ENCODE measurements at regions of chr10 and their contacts with region 1.

Region 1: GRCh38 chr10:73892310-73893030 is 18.1 kb upstream of the CAMK2G start:
- DNase-seq: no peak
- ATAC-seq: no peak
- H3K4me3 Mint-ChIP-seq: no peak overlapping the region
- H3K27ac Mint-ChIP-seq: no peak overlapping the region
- H3K4me1 Mint-ChIP-seq: peaks cover 9% of the 10 kb centered on the region
- H3K27me3 Mint-ChIP-seq: no peaks in the 10 kb centered on the region
- CTCF ChIP-seq: no peak

Region 2: GRCh38 chr10:73591935-73592699 is 300.4 kb before region 1 on chr10:
- CTCF ChIA-PET with region 1: no interaction called
- POLR2A ChIA-PET with region 1: no interaction called
- intact Hi-C with region 1: no loop called
- DNase-seq: no peak
- ATAC-seq: peak; percentile 71
- H3K4me3 Mint-ChIP-seq: peak overlapping the region; percentile 61
- H3K27ac Mint-ChIP-seq: peak overlapping the region; percentile 47
- H3K4me1 Mint-ChIP-seq: peaks cover 13% of the 10 kb centered on the region
- H3K27me3 Mint-ChIP-seq: no peaks in the 10 kb centered on the region
- CTCF ChIP-seq: no peak

Region 3: GRCh38 chr10:73920089-73920488 is 27.6 kb after region 1 on chr10:
- CTCF ChIA-PET with region 1: no interaction called
- POLR2A ChIA-PET with region 1: interaction called, 11 read pairs
- intact Hi-C with region 1: no loop called
- DNase-seq: no peak
- ATAC-seq: peak; percentile 88
- H3K4me3 Mint-ChIP-seq: no peak overlapping the region
- H3K27ac Mint-ChIP-seq: peak overlapping the region; percentile 72
- H3K4me1 Mint-ChIP-seq: peaks cover 12% of the 10 kb centered on the region
- H3K27me3 Mint-ChIP-seq: no peaks in the 10 kb centered on the region
- CTCF ChIP-seq: no peak

Measured in activated B cell treated with CpG ODN at 0.5 μM for 24 hours (primary cell).